Tibial artery (tissue), 4 donors: ENCODE measurements at regions of chr11 and their contacts with region 1.

Region 1: GRCh38 chr11:75280227-75280701 is 39.7 kb downstream of the TPBGL start:
- DNase-seq: peak; percentile 71 to 84
- H3K4me3 ChIP-seq: no peak overlapping the region
- H3K27ac ChIP-seq: no peak overlapping the region
- H3K4me1 ChIP-seq: peaks cover 0 to 4% (median 0%) of the 10 kb centered on the region in 4 donors
- H3K27me3 ChIP-seq: no peaks in the 10 kb centered on the region
- CTCF ChIP-seq: peak; percentile 90 to 96

Region 2: DNA sequence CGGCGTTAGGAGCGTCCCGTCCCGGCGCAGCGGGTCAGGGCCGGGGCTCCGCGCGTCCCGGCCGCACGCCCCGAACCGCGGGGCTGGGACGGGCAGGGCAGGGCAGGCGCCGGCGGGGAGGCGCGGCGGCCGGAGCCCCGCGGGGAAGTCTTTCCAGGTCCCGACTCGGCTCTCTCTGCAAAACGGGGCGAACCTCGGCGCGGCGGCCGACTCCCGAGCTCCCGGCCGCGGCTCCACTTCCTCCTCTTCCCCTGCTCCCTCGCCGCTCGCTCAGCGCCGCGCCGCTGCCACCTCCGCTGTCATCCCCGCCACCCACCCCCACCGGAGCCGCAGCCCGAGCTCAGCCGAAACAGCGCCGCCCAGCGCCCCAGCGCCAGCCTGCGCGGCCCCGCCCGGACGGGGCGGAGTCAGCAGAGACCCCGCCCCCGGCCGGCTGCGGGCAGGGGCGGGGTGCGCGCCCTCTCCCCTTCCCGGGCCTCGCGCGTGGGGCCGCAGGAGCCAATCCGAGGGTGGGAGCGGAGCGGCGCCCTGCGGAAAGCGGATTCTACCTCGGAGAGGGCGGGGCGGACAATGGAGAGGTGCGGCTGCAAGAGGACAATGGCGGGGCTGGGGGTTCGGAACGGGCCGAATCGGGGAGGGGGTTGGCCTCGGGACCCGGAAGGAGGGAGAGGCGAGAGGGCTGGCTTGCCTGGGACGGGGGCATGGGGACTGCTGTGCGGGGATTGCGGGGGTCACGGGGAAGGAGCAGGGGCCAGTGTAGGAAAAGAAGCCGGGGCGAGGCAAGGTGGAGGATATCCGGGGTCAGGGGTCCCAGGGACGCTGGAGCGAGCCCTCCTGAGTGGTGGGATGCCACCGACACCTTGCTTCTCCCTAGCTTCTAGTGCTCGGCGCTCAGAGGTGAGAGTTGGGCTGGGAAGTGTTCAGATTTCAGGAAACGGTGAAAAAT is 245.6 kb after region 1 on chr11 and contains the start of gene GDPD5:
- intact Hi-C with region 1: loop called (anchors 10 kb)
- DNase-seq: peak; percentile 74 to 85
- H3K4me3 ChIP-seq: peak within 1 kb of the TSS; percentile 61 to 66
- H3K27ac ChIP-seq: peak within 1 kb of the TSS; percentile 39 to 60
- H3K4me1 ChIP-seq: peaks cover 0 to 33% (median 25%) of the 10 kb centered on the region in 4 donors
- H3K27me3 ChIP-seq: no peaks in the 10 kb centered on the region
- CTCF ChIP-seq: peak; percentile 28 to 42